ENCODE measurements at regions of chr11 and their contacts with region 1.

Region 1: GRCh38 chr11:76656571-76657081 is 13.9 kb downstream of the LRRC32 start:
- DNase-seq: peak; percentile 78

Region 2: GRCh38 chr11:75351791-75352587 is 1304.6 kb before region 1 on chr11:
- intact Hi-C with region 1: no loop called
- DNase-seq: peak; percentile 91

Region 3: DNA sequence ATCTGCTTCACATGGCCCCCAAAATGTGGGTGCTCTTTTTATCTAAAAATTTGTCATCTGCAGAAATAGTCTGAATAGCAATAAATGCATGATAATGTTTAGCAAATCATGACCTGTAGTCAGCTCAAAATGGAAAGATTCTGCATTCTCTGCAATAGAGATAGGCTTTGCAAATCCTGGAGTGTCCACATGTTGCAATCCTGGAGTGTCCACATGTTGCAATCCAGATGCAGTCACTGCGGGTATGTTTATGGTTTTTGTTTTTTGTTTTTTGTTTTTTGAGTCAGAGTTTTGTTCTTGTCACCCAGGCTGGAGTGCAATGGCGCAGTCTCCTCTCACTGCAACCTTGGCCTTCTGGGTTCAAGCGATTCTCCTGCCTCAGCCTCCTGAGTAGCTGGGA is 34.1 kb after region 1 on chr11:
- intact Hi-C with region 1: loop called in 1 of 2 experiments (anchors 1 kb)
- DNase-seq: no peak